Naive thymus-derived CD4-positive, alpha-beta T cell (primary cell): ENCODE measurements at regions of chr5 and their contacts with region 1.

Region 1: GRCh38 chr5:147453875-147454814 is 55.7 kb downstream of the DPYSL3 start:
- DNase-seq: peak; percentile 8 to 77 (median 48)
- ATAC-seq: peak; percentile 82
- H3K4me3 ChIP-seq: peak overlapping the region; percentile 27
- H3K4me3 Mint-ChIP-seq: peak overlapping the region; percentile 77 to 91 (median 82)
- H3K27ac ChIP-seq: no peak overlapping the region
- H3K27ac Mint-ChIP-seq: peak overlapping the region in 1 of 9 donors; percentile 52
- H3K4me1 ChIP-seq: no peaks in the 10 kb centered on the region
- H3K4me1 Mint-ChIP-seq: peaks cover 8 to 31% (median 18%) of the 10 kb centered on the region in 7 donors
- H3K27me3 ChIP-seq: peaks cover 0 to 4% of the 10 kb centered on the region in 2 donors
- H3K27me3 Mint-ChIP-seq: peaks cover 63 to 88% (median 82%) of the 10 kb centered on the region in 5 donors

Region 2: GRCh38 chr5:147576646-147577535 is 122.7 kb after region 1 on chr5:
- CTCF ChIA-PET with region 1: no interaction called
- POLR2A ChIA-PET with region 1: no interaction called
- intact Hi-C with region 1: loop called in 1 of 2 experiments (anchors 5 kb)
- DNase-seq: peak in 1 of 9 donors; percentile 54
- ATAC-seq: peak; percentile 42
- H3K4me3 ChIP-seq: no peak overlapping the region
- H3K4me3 Mint-ChIP-seq: no peak overlapping the region
- H3K27ac ChIP-seq: no peak overlapping the region
- H3K27ac Mint-ChIP-seq: no peak overlapping the region
- H3K4me1 ChIP-seq: no peaks in the 10 kb centered on the region
- H3K4me1 Mint-ChIP-seq: no peaks in the 10 kb centered on the region
- H3K27me3 ChIP-seq: no peaks in the 10 kb centered on the region
- H3K27me3 Mint-ChIP-seq: peaks cover 0 to 6% (median 5%) of the 10 kb centered on the region in 5 donors

Region 3: DNA sequence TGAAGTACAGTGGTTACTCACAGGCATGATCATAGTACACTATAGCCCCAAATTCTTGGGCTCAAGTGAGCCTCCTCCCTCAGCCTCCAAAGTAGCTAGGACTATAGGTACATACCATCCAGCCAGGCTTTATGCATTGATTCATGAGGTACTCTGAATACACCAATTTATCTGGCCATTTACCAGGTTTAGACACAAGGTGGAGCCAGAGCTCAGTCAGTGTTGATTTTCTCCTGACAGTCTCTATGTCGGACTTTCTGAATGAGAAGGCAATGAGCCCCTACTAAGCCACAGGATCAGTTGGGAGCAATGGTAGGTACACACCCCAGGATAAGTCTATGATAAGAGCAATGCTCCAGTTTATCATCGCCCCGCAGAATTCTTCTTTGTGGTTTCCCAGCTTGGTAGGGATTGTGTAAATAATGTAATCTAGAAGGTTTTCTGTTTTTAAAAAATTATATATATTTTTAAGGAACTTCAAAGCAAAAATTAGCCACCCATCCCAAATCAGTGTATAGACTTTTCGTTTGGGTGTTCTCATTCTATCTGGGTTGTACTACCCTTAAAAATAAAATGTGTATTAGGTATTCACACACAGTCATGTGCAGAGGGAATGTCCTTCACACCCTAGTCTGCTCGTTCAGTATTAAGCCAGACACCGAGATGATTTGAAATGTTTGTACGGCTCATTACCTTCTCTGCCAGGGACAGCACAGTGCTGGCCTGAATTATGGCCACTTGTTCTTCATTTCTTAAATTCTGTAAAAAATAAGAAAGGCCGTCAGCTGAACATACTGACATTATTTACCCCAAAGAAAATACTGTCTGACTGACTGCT is 174.1 kb after region 1 on chr5:
- CTCF ChIA-PET with region 1: no interaction called
- POLR2A ChIA-PET with region 1: no interaction called
- intact Hi-C with region 1: loop called in 1 of 2 experiments (anchors 5 kb)
- DNase-seq: peak in 7 of 9 donors; percentile 5 to 66 (median 36)
- ATAC-seq: peak; percentile 79
- H3K4me3 ChIP-seq: no peak overlapping the region
- H3K4me3 Mint-ChIP-seq: no peak overlapping the region
- H3K27ac ChIP-seq: no peak overlapping the region
- H3K27ac Mint-ChIP-seq: no peak overlapping the region
- H3K4me1 ChIP-seq: no peaks in the 10 kb centered on the region
- H3K4me1 Mint-ChIP-seq: no peaks in the 10 kb centered on the region
- H3K27me3 ChIP-seq: no peaks in the 10 kb centered on the region
- H3K27me3 Mint-ChIP-seq: peaks cover 0 to 5% (median 0%) of the 10 kb centered on the region in 5 donors